Activated CD4-positive, alpha-beta T cell treated with anti-CD3 and anti-CD28 coated beads, Interleukin-2, amount 10 ng/mL, durations not matched to agents 24 days and 14 days (primary cell): ENCODE measurements at regions of chr12 and their contacts with region 1.

Region 1: DNA sequence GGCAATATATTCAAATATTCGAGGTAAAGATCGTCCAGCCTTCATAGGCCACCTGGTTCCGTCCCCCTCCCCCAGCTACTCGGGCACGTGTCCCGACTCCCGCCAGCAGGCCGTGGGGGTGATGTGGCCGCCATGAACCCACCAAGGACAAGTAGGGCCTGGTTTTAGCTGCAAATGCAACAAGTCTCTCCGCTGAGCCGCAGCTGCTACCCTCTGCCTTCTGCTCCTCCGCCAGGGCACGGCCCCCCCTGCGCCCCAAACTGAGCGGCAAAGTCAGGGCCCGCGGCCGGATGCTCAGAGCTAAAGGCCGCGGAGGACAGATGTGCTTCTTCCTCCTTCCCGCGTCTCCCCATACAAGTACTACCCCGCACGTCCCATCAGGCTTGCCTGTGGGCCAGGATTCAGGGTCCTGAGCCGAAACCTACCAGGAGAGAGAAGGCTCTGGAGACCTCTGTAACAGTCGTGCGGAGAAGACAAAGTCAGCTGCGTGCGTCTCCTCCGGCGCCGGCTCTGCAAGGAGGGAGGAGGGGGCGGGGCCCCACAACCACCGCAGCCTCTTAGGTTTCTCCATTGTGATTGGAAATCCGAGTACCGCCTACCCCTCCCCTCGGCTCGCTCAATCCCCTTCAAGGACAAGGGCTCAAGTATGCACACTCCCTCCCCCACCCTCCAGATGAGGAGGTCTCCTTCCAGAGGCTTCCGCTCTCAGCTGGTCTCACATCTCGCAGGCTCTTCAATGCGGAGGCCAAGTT is at the start of gene LDHB:
- DNase-seq: peak; percentile 98
- H3K4me3 Mint-ChIP-seq: peak within 1 kb of the TSS; percentile 93
- H3K27ac Mint-ChIP-seq: peak within 1 kb of the TSS; percentile 99
- H3K4me1 Mint-ChIP-seq: peaks cover 37% of the 10 kb centered on the region
- H3K27me3 Mint-ChIP-seq: peaks cover 3% of the 10 kb centered on the region
- total RNA-seq, gene LDHB: 1,574 and 1,607 TPM in 2 replicates

Region 2: DNA sequence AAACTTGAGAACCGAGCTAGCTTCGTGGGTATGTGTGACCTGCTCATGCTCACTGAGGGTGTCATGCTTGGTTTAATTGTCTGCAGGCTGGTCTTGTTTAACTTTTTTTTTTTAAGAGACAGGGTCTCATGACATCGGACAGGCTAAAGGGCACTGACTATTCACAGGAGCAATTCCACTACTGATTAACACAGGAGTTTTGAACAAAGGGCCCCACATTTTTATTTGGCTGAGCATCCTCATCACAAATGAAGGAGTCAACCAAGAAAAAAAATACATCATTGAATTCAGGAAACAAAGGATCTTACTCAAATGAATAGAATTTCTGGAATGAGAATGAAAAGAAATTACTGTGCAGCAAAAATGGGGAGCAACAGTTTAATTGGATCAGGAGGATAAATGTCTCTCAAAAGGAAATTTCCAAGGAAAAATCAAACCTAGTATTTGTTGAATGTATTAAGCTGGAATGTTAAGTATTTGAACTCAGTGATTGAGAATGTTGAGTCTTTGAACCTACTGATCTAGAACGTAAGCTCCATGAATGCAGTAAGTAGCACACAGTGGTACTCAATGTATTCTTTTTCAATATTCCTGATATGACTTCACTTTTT is 240.9 kb before region 1 on chr12:
- intact Hi-C with region 1: no loop called
- DNase-seq: no peak
- H3K4me3 Mint-ChIP-seq: no peak overlapping the region
- H3K27ac Mint-ChIP-seq: no peak overlapping the region
- H3K4me1 Mint-ChIP-seq: no peaks in the 10 kb centered on the region
- H3K27me3 Mint-ChIP-seq: peaks cover 17% of the 10 kb centered on the region

Region 3: GRCh38 chr12:21456291-21456780 is 201.2 kb before region 1 on chr12:
- intact Hi-C with region 1: loop called (anchors 2 kb)
- DNase-seq: peak; percentile 88
- H3K4me3 Mint-ChIP-seq: peak overlapping the region; percentile 59
- H3K27ac Mint-ChIP-seq: peak overlapping the region; percentile 97
- H3K4me1 Mint-ChIP-seq: peaks cover 50% of the 10 kb centered on the region
- H3K27me3 Mint-ChIP-seq: no peaks in the 10 kb centered on the region

Region 4: DNA sequence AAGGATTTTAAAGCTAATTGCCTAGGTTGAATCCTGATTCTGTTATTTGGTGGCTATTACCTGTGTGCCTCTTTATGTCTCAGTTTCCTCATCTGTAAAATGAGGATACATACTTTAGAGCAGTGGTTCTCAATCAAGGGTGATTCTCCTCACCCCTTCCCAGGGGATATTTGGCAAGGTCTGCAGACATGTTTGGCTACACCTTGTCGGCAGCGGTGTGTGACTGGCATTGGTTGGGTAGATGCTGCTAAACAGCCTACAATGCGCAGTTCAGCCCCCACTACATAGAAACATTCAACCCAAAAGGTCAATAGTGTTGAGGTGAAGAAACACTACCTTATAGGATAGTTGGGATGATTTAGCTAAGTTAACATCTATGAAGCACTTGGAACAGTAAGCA is 23.3 kb before region 1 on chr12:
- intact Hi-C with region 1: loop called (anchors 2 kb)
- DNase-seq: no peak
- H3K4me3 Mint-ChIP-seq: no peak overlapping the region
- H3K27ac Mint-ChIP-seq: no peak overlapping the region
- H3K4me1 Mint-ChIP-seq: peaks cover 9% of the 10 kb centered on the region
- H3K27me3 Mint-ChIP-seq: no peaks in the 10 kb centered on the region

Region 5: GRCh38 chr12:21677622-21678277 is 20.2 kb after region 1 on chr12:
- intact Hi-C with region 1: loop called (anchors 1 kb)
- DNase-seq: no peak
- H3K4me3 Mint-ChIP-seq: no peak overlapping the region
- H3K27ac Mint-ChIP-seq: peak overlapping the region; percentile 57
- H3K4me1 Mint-ChIP-seq: peaks cover 32% of the 10 kb centered on the region
- H3K27me3 Mint-ChIP-seq: no peaks in the 10 kb centered on the region

Region 6: GRCh38 chr12:21764065-21764464 is 106.6 kb after region 1 on chr12:
- intact Hi-C with region 1: no loop called
- DNase-seq: no peak
- H3K4me3 Mint-ChIP-seq: no peak overlapping the region
- H3K27ac Mint-ChIP-seq: no peak overlapping the region
- H3K4me1 Mint-ChIP-seq: no peaks in the 10 kb centered on the region
- H3K27me3 Mint-ChIP-seq: peaks cover 2% of the 10 kb centered on the region